ENCODE measurements at regions of chr3 and their contacts with region 1.

Region 1: GRCh38 chr3:151265866-151266265 is 12.5 kb downstream of the P2RY14 start:
- DNase-seq: peak; percentile 44
- ATAC-seq: peak; percentile 87
- H3K4me3 Mint-ChIP-seq: peak overlapping the region; percentile 60
- H3K27ac Mint-ChIP-seq: peak overlapping the region; percentile 98
- H3K4me1 Mint-ChIP-seq: peaks cover 66% of the 10 kb centered on the region
- H3K27me3 Mint-ChIP-seq: no peaks in the 10 kb centered on the region
- CTCF ChIP-seq: no peak

Region 2: DNA sequence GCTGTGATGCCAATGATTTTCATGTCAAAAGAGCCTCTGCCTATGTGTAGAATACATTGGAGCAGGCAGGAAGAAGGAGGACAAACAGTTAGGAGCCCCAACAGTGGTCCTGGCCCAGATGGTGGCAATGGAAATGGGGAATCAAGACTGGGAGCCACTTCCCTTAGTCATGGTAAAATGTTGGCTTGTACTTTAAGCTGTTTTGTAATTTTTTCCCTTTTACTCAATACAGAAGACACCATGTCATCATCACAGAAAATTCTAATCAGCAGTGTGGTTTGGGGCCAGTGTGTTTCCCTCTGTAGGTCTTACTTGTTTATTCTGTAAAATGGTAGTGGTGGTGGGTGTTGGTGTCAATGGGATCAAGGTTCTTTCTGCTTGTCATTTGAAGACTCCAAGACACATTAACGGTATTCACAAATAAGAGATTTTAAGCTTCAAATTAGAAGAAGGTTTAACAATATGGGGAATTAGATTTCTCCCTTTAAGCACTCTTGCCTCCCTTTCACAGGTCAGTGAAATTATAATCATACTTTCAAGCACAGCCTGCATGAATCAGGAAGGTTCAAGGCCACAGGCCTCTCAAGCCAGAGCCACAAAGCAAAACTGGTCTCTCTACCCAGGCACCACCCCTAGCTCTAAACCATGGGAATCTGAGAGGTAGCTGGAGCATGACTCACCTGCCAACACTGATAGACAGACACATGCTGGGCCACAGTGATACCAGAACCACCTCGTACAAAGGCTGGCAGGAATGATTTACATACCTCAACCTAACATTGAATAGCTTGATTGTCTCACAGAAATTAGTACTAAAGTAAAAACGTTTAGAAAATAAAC is 527.8 kb before region 1 on chr3:
- CTCF ChIA-PET with region 1: no interaction called
- POLR2A ChIA-PET with region 1: no interaction called
- intact Hi-C with region 1: loop called (anchors 1 kb)
- DNase-seq: no peak
- ATAC-seq: peak; percentile 11
- H3K4me3 Mint-ChIP-seq: peak overlapping the region; percentile 36
- H3K27ac Mint-ChIP-seq: peak overlapping the region; percentile 83
- H3K4me1 Mint-ChIP-seq: peaks cover 65% of the 10 kb centered on the region
- H3K27me3 Mint-ChIP-seq: no peaks in the 10 kb centered on the region
- CTCF ChIP-seq: no peak

Region 3: GRCh38 chr3:151276687-151277042 is 10.8 kb after region 1 on chr3:
- CTCF ChIA-PET with region 1: interaction called, 24 read pairs
- POLR2A ChIA-PET with region 1: interaction called, 16 read pairs
- intact Hi-C with region 1: loop called (anchors 1 kb)
- DNase-seq: peak; percentile 33
- ATAC-seq: peak; percentile 77
- H3K4me3 Mint-ChIP-seq: peak overlapping the region; percentile 75
- H3K27ac Mint-ChIP-seq: peak overlapping the region; percentile 97
- H3K4me1 Mint-ChIP-seq: peaks cover 82% of the 10 kb centered on the region
- H3K27me3 Mint-ChIP-seq: no peaks in the 10 kb centered on the region
- CTCF ChIP-seq: no peak

Region 4: DNA sequence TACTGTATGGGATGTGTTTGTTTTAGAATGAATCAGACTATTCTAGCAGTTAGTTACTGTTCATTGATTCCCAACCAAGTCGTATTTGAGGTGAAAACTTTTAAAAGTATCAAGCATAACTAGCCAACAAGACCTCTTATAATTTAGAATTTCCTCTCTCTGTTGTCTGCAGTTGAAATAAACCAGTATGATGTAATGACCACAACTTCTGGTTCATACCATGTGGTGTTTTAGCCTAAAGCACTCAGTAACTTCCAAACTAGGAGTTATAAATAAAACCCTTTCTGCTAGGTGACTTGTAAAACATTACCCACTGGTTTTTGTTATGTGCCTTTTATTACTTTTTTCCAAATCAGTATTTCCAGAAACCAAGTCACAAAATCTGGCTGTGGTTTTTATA is 138.4 kb after region 1 on chr3:
- CTCF ChIA-PET with region 1: no interaction called
- POLR2A ChIA-PET with region 1: no interaction called
- intact Hi-C with region 1: no loop called
- DNase-seq: no peak
- ATAC-seq: no peak
- H3K4me3 Mint-ChIP-seq: no peak overlapping the region
- H3K27ac Mint-ChIP-seq: no peak overlapping the region
- H3K4me1 Mint-ChIP-seq: peaks cover 5% of the 10 kb centered on the region
- H3K27me3 Mint-ChIP-seq: no peaks in the 10 kb centered on the region
- CTCF ChIP-seq: no peak

Region 5: GRCh38 chr3:152508705-152509104 is 1242.8 kb after region 1 on chr3:
- CTCF ChIA-PET with region 1: no interaction called
- POLR2A ChIA-PET with region 1: no interaction called
- intact Hi-C with region 1: loop called (anchors 10 kb)
- DNase-seq: no peak
- ATAC-seq: no peak
- H3K4me3 Mint-ChIP-seq: peak overlapping the region; percentile 6
- H3K27ac Mint-ChIP-seq: peak overlapping the region; percentile 82
- H3K4me1 Mint-ChIP-seq: peaks cover 88% of the 10 kb centered on the region
- H3K27me3 Mint-ChIP-seq: no peaks in the 10 kb centered on the region
- CTCF ChIP-seq: no peak